ENCODE measurements at regions of chr6 and their contacts with region 1.

Region 1: GRCh38 chr6:19478992-19479391 is 358.2 kb upstream of the ID4 start:
- DNase-seq: peak in 1 of 2 experiments; percentile 44
- H3K4me3 ChIP-seq: no peak overlapping the region
- H3K27ac ChIP-seq: no peak overlapping the region
- H3K4me1 ChIP-seq: peaks cover 32% of the 10 kb centered on the region
- H3K27me3 ChIP-seq: no peaks in the 10 kb centered on the region
- CTCF ChIP-seq: no peak

Region 2: DNA sequence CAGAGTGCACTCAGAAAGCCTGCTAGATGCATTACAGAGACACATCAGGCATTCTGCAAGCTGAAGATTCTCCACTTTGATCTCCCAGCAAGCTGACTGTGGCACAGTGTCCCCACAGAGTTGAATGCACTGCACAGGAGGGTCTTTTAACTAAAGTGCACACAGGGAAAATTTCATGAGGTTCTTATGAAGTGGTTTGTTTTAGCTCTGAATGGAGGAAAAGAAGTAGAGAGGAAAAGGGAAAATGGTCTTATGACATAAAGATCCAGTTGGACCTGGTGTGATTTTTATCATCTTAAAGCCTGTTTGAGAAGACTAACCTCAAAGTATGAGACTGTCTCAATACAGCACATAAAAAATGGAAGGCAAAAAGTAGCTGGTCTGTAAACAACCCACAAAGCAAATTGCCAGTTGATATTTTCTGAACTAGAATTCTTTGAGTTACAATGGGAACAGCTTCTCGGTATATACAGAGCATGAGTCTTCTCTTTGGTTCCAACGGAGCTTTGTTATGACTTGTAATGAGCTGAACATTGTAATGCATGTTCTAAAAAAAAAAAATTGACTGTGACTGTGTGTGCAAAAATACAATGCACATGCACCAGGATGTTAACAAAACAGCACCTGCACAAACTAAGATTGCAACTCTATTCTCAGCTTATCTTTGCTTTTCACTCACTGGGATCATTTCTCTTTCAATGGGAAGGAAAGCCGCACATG is 24.8 kb before region 1 on chr6:
- CTCF ChIA-PET with region 1: no interaction called
- POLR2A ChIA-PET with region 1: no interaction called
- intact Hi-C with region 1: loop called (anchors 1 kb)
- DNase-seq: peak in 1 of 2 experiments; percentile 36
- H3K4me3 ChIP-seq: no peak overlapping the region
- H3K27ac ChIP-seq: no peak overlapping the region
- H3K4me1 ChIP-seq: peaks cover 22% of the 10 kb centered on the region
- H3K27me3 ChIP-seq: no peaks in the 10 kb centered on the region
- CTCF ChIP-seq: no peak

Region 3: DNA sequence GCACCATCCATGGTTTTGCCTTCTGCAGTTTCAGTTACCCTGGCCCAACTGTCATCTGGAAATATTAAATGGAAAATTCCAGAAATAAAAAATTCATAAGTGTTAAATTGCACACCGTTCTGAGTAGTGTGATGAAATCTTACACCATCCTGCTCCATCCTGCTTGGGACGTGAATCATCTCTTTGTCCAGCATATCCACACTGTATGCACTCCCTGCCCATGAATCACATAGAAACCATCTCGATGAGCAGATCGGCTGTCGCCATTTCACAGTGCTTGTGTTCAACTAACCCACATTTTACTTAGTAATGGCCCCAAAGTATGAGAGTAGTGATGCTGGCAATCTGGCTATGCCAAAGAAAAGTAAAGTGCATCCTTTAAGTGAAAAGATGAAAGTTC is 252.3 kb after region 1 on chr6:
- CTCF ChIA-PET with region 1: no interaction called
- POLR2A ChIA-PET with region 1: no interaction called
- intact Hi-C with region 1: loop called (anchors 1 kb)
- DNase-seq: peak; percentile 26 to 43
- H3K4me3 ChIP-seq: no peak overlapping the region
- H3K27ac ChIP-seq: peak overlapping the region; percentile 41
- H3K4me1 ChIP-seq: 0 out of 2 replicates have a peak, but pooled peaks cover 3% of the 10 kb centered on the region
- H3K27me3 ChIP-seq: no peaks in the 10 kb centered on the region
- CTCF ChIP-seq: no peak

Measured in PC-9 (cell line).